ENCODE measurements at regions of chr16 and their contacts with region 1.

Region 1: DNA sequence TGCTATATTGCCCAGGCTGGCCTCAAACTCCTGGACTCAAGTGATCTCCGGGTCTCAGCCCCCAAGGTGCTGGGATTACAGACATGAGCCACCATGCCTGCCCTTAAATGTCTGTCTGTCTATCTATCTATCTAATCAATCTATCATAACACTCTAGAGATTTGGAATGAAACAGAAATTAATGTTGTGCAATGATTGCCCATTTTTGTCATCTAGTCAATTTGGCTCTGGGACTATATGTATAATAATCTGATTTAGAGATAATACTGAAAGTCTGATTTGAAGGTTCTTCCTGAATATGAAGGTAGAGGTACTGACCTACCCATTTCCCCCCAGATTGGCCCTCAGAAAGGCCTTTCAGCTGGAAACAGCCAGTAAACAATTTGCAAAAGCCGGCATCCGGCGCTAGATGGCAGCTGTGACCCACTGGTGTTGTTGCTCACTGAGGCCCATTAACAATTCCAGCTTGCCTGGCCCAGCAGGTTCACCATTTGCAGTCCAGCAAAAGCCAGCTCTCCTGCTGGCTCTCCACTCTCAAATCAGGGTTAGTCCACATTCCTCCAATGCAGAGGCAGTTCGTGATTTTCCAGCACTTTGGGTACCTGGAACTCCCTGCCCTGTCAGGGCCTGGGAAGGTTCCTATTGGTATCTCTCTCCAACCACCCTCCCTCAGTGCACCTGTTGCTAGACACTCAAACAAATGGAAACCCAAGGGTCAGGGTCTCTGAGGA is 22.9 kb upstream of the C16orf87 start:
- DNase-seq: peak; percentile 49
- H3K4me3 ChIP-seq: no peak overlapping the region
- H3K27ac ChIP-seq: no peak overlapping the region
- H3K4me1 ChIP-seq: no peaks in the 10 kb centered on the region
- H3K27me3 ChIP-seq: no peaks in the 10 kb centered on the region
- CTCF ChIP-seq: peak; percentile 88 to 94

Region 2: GRCh38 chr16:46899443-46900143 is 45.7 kb after region 1 on chr16:
- CTCF ChIA-PET with region 1: no interaction called
- dilution Hi-C with region 1: no loop called
- in situ Hi-C with region 1: loop called in 1 of 2 experiments (anchors 5 kb)
- intact Hi-C with region 1: no loop called
- DNase-seq: no peak
- H3K4me3 ChIP-seq: no peak overlapping the region
- H3K27ac ChIP-seq: no peak overlapping the region
- H3K4me1 ChIP-seq: no peaks in the 10 kb centered on the region
- H3K27me3 ChIP-seq: no peaks in the 10 kb centered on the region
- CTCF ChIP-seq: no peak

Region 3: GRCh38 chr16:46929378-46930332 is 75.8 kb after region 1 on chr16:
- CTCF ChIA-PET with region 1: no interaction called
- dilution Hi-C with region 1: no loop called
- in situ Hi-C with region 1: loop called in 1 of 2 experiments (anchors 10 kb)
- intact Hi-C with region 1: loop called (anchors 1 kb)
- DNase-seq: peak; percentile 31
- H3K4me3 ChIP-seq: no peak overlapping the region
- H3K27ac ChIP-seq: no peak overlapping the region
- H3K4me1 ChIP-seq: no peaks in the 10 kb centered on the region
- H3K27me3 ChIP-seq: no peaks in the 10 kb centered on the region
- CTCF ChIP-seq: peak; percentile 86 to 89

Region 4: DNA sequence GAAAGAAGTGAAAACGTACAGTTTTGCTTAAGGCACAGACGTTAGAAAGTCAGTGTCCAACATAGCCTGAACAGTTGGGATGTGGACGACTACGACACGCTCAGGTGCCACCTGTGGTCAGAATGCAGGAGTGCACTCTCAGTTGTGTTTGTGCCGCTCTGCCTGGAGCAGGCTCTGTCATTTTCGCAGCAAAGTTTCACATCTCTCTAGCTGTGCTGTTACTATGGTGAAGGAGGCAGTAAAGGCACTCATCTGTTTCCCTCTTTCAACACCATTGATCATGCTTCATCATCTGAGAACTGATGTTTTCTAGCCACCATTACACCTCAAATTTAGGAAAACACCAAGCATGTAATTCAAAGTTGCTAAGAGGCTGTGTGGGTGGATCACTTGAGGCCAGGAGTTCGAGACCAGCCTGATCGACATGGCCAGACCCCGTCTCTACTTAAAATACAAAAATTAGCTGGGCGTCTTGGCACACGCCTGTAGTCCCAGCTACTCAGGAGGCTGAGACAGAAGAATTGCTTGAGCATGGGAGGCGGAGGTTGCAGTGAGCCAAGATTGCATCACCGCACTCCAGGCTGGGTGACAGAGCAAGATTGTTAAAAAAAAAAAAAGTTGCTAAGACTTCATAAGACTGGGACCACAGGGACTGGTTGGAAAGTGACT is 164.5 kb after region 1 on chr16:
- CTCF ChIA-PET with region 1: no interaction called
- dilution Hi-C with region 1: no loop called
- in situ Hi-C with region 1: no loop called
- intact Hi-C with region 1: loop called (anchors 1 kb)
- DNase-seq: peak; percentile 56
- H3K4me3 ChIP-seq: no peak overlapping the region
- H3K27ac ChIP-seq: no peak overlapping the region
- H3K4me1 ChIP-seq: no peaks in the 10 kb centered on the region
- H3K27me3 ChIP-seq: no peaks in the 10 kb centered on the region
- CTCF ChIP-seq: peak; percentile 57 to 82

Measured in mammary epithelial cell (primary cell).